Thyroid gland (tissue), 4 donors: ENCODE measurements at regions of chr19 and their contacts with region 1.

Region 1: DNA sequence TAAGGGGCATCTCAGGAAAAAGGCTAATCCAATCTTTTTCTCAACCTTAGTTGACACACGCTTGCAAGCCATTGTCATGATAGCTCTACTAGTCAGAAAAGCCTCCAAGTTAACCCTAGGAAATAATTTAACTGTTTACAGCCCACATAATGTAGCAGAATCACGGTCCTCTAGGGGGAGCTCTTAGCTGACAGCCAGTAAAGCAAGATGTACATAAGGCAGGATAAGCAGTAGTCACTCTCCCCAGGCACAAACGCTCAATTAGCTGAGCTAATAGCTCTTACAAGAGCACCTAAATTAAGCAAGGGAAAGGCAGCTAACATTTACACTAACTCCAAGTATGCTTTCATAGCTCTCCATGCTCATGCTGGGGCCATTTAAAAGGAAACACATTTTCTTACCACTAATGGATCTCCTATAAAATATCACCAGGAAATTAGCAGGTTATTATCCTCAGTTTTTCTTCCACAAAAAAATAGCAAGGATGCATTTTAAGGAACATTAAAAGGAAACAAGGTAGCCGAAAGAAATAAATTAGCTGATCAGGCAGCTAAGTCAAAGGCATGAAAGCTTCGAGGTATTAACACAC is 33.7 kb upstream of the ZSCAN5A start:
- DNase-seq: no peak
- H3K4me3 ChIP-seq: no peak overlapping the region
- H3K27ac ChIP-seq: no peak overlapping the region
- H3K4me1 ChIP-seq: no peaks in the 10 kb centered on the region
- H3K27me3 ChIP-seq: no peaks in the 10 kb centered on the region
- CTCF ChIP-seq: peak in 1 of 6 experiments; percentile 6
- POLR2A ChIP-seq: no peak

Region 2: DNA sequence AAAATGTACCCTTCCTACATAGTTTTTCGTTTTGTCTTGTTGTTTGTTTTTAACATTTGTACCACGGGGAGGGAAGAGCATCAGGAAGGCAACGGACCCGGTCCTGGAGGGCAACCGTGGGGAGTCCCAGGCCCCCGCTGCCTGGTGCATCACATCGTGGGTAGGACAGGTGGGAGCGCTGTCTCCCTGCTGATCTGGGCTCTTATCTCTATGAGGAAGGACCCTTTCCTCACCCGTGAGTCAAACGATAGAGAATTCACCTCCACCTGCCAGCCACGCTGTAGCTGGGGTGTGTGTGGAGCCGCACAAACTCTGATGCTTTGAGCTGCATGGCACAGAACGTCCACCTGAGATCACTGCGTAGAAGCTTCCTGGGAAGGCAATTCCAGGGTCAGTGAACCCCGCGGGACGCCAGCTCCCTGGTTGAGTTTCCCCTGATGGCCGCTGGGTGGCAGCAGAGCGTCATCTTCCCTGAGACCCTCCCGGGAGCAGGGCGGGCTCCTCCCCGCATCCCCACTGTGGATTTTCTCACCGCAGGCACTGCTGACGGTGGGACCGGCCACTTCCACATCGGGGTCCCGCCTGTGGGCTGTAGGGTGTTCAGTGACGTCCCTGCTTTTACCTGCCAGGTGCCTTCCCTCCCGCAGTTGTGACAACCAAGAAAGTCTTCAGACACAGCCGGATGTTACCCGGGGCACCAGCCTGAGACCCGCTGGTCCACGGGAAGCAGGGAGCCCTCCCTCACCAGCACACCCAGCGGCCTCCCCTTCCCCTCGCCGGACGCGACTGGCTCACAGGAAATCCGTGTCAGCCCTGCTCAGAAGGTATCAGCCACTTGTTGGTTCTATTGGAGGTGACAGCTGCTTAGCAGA is 282.0 kb before region 1 on chr19:
- intact Hi-C with region 1: loop called (anchors 5 kb)
- DNase-seq: peak; percentile 65 to 74
- H3K4me3 ChIP-seq: no peak overlapping the region
- H3K27ac ChIP-seq: no peak overlapping the region
- H3K4me1 ChIP-seq: peaks cover 0 to 8% of the 10 kb centered on the region in 2 donors
- H3K27me3 ChIP-seq: no peaks in the 10 kb centered on the region
- CTCF ChIP-seq: peak; percentile 67 to 91 (median 78)
- POLR2A ChIP-seq: no peak

Region 3: DNA sequence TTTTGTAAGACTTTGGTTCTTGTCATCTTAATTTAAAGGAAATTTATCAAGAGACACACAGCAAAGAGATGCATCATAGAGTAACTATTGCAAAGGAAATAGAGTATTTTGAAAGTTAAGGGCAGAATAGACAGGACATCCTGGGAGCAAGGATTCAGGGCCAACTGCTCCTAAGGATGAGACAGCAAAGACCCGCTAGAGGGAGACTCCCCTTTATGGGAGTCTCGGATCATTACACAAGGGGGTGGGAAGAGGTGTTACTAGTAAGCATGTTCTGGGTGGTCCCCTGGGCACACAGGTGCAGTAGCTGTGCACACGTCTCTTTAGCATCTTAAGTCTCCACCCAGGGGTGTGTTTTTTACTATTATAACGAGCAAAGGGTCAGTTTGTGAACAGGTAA is 136.7 kb before region 1 on chr19:
- intact Hi-C with region 1: no loop called
- DNase-seq: no peak
- H3K4me3 ChIP-seq: no peak overlapping the region
- H3K27ac ChIP-seq: no peak overlapping the region
- H3K4me1 ChIP-seq: no peaks in the 10 kb centered on the region
- H3K27me3 ChIP-seq: no peaks in the 10 kb centered on the region
- CTCF ChIP-seq: no peak
- POLR2A ChIP-seq: no peak